Left lung (tissue), 14 donors: ENCODE measurements at regions of chr3 and their contacts with region 1.

Region 1: GRCh38 chr3:132405188-132405587 is 12.1 kb upstream of the DNAJC13 start:
- DNase-seq: peak in 1 of 4 donors; percentile 44
- ATAC-seq: peak; percentile 80
- H3K4me3 ChIP-seq: no peak overlapping the region
- H3K27ac ChIP-seq: peak overlapping the region; percentile 9 to 47
- H3K4me1 ChIP-seq: peaks cover 7 to 19% of the 10 kb centered on the region in 2 donors
- H3K27me3 ChIP-seq: no peaks in the 10 kb centered on the region
- CTCF ChIP-seq: no peak

Region 2: GRCh38 chr3:131957511-131957910 is 447.7 kb before region 1 on chr3:
- intact Hi-C with region 1: no loop called
- DNase-seq: no peak
- ATAC-seq: no peak
- H3K4me3 ChIP-seq: no peak overlapping the region
- H3K27ac ChIP-seq: no peak overlapping the region
- H3K4me1 ChIP-seq: no peaks in the 10 kb centered on the region
- H3K27me3 ChIP-seq: no peaks in the 10 kb centered on the region
- CTCF ChIP-seq: no peak

Region 3: DNA sequence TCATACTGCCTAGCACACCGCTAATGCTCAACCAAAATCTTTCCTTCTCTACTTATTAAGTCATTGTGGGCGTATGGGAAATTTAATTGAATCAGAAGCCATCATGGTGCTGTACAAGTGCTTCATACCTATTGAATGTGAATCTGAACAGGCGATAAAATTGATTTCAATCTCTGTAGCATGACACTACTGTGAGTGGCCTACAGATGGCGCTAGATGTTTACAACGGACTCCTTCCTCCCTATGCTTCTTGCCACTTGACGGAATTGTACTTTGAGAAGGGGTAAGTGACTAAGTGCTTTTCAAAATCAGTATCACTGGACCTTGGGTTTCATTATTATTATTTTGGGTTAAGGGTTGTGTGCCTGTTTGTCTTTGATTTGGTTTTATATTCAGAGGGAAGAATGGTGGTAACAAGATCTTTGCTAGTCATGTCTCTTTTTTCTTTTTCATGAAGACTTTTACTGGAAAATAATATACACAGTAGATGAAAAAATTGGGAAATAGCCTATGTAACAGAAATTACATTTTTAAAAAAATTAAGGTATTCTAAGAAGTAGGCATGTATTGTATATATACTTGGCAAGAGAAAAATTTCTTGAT is 52.5 kb before region 1 on chr3:
- intact Hi-C with region 1: loop called in 1 of 2 experiments (anchors 10 kb)
- DNase-seq: peak in 3 of 4 donors; percentile 40 to 66 (median 46)
- ATAC-seq: peak; percentile 98
- H3K4me3 ChIP-seq: no peak overlapping the region
- H3K27ac ChIP-seq: no peak overlapping the region
- H3K4me1 ChIP-seq: peaks cover 0 to 5% of the 10 kb centered on the region in 2 donors
- H3K27me3 ChIP-seq: no peaks in the 10 kb centered on the region
- CTCF ChIP-seq: peak; percentile 74 to 85